ENCODE measurements at regions of chr1 and their contacts with region 1.

Region 1: DNA sequence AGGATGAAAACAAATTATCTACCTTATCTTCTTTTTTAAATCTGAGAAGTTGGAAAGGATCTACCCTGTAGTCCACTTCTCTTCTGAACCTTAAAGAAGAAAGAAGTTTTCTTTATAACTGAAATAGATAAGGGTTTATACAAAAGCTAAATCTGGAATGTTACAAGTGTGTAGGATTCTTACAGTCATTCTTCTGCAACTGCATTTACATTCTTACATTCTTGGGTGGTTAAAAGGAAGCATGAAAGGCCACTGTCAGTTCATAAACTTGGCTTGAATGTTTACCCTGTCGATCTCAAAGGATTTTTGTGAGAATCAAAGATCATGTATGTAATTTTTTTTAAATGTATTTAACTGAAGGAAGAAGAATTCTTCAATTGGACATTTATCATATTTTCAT is 142.1 kb upstream of the BRINP3 start:
- DNase-seq: no peak
- ATAC-seq: no peak
- H3K4me3 ChIP-seq: no peak overlapping the region
- H3K27ac ChIP-seq: no peak overlapping the region
- H3K4me1 ChIP-seq: no peaks in the 10 kb centered on the region
- H3K27me3 ChIP-seq: 0 out of 2 replicates have a peak, but pooled peaks cover 3% of the 10 kb centered on the region
- CTCF ChIP-seq: no peak

Region 2: GRCh38 chr1:190649553-190649952 is 29.8 kb after region 1 on chr1:
- CTCF ChIA-PET with region 1: no interaction called
- POLR2A ChIA-PET with region 1: no interaction called
- intact Hi-C with region 1: no loop called
- DNase-seq: no peak
- ATAC-seq: no peak
- H3K4me3 ChIP-seq: no peak overlapping the region
- H3K27ac ChIP-seq: no peak overlapping the region
- H3K4me1 ChIP-seq: no peaks in the 10 kb centered on the region
- H3K27me3 ChIP-seq: peaks cover 10% of the 10 kb centered on the region
- CTCF ChIP-seq: no peak

Region 3: DNA sequence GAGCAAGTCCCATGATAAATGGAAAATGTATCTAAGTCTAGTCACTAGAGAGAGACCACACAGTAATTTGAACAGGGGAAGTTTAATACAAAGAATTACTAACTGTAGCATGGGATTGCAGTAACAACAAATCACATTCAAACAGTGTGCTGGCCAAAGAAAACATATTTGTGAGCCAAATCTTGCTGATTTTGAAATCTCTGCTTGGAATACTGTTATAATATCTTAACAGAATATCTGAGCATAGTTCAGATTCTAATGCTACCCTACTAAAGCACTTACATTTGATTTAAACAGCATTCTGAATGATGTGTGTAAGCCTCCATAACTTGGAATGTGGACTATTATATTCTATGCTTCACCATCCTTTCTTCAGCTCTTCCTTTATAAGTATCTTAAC is 128.0 kb after region 1 on chr1:
- CTCF ChIA-PET with region 1: no interaction called
- POLR2A ChIA-PET with region 1: no interaction called
- intact Hi-C with region 1: no loop called
- DNase-seq: no peak
- ATAC-seq: no peak
- H3K4me3 ChIP-seq: no peak overlapping the region
- H3K27ac ChIP-seq: no peak overlapping the region
- H3K4me1 ChIP-seq: no peaks in the 10 kb centered on the region
- H3K27me3 ChIP-seq: peaks cover 28% of the 10 kb centered on the region
- CTCF ChIP-seq: no peak

Region 4: DNA sequence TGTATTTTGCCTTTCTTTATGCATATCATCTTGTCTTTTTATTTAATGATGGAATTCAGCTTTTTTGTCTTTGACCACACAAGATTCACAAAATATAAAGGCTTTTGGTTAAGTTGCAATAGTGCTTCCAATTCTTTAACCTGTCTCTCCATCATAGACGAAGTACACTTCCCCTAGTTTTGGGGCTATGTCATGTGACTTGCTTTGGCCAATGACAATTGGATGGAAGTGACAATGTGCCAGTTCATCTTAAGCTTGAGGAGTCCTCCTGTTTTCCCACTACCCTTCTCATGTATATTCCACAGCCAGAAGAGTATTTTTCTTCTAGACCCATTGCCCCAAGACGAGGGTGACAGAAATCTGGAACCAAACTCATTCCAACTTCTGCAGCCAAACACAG is 277.5 kb after region 1 on chr1:
- CTCF ChIA-PET with region 1: no interaction called
- POLR2A ChIA-PET with region 1: no interaction called
- intact Hi-C with region 1: loop called (anchors 5 kb)
- DNase-seq: no peak
- ATAC-seq: no peak
- H3K4me3 ChIP-seq: no peak overlapping the region
- H3K27ac ChIP-seq: no peak overlapping the region
- H3K4me1 ChIP-seq: no peaks in the 10 kb centered on the region
- H3K27me3 ChIP-seq: peaks cover 2% of the 10 kb centered on the region; the same call in 1 of the 2 replicates
- CTCF ChIP-seq: no peak